ENCODE measurements at regions of chr1 and their contacts with region 1.

Region 1: GRCh38 chr1:91725989-91726721 is 159.8 kb downstream of the TGFBR3 start:
- DNase-seq: peak; percentile 97
- ATAC-seq: peak; percentile 96
- H3K4me3 ChIP-seq: no peak overlapping the region
- H3K27ac ChIP-seq: peak overlapping the region; percentile 94
- H3K4me1 ChIP-seq: peaks cover 10% of the 10 kb centered on the region
- H3K27me3 ChIP-seq: no peaks in the 10 kb centered on the region
- CTCF ChIP-seq: no peak
- POLR2A ChIP-seq: no peak
- RAD21 ChIP-seq: peak; percentile 14; the same call in 1 of the 2 replicates

Region 2: GRCh38 chr1:91440845-91441244 is 285.3 kb before region 1 on chr1:
- CTCF ChIA-PET with region 1: no interaction called
- POLR2A ChIA-PET with region 1: no interaction called
- dilution Hi-C with region 1: no loop called
- in situ Hi-C with region 1: no loop called
- intact Hi-C with region 1: no loop called
- DNase-seq: no peak
- ATAC-seq: no peak
- H3K4me3 ChIP-seq: no peak overlapping the region
- H3K27ac ChIP-seq: no peak overlapping the region
- H3K4me1 ChIP-seq: no peaks in the 10 kb centered on the region
- H3K27me3 ChIP-seq: no peaks in the 10 kb centered on the region
- CTCF ChIP-seq: no peak; the same call in 1 of the 2 replicates
- POLR2A ChIP-seq: no peak
- RAD21 ChIP-seq: no peak

Region 3: GRCh38 chr1:91537281-91537986 is 188.7 kb before region 1 on chr1:
- CTCF ChIA-PET with region 1: no interaction called
- POLR2A ChIA-PET with region 1: no interaction called
- dilution Hi-C with region 1: no loop called
- in situ Hi-C with region 1: no loop called
- intact Hi-C with region 1: loop called (anchors 5 kb)
- DNase-seq: peak; percentile 91
- ATAC-seq: peak; percentile 97
- H3K4me3 ChIP-seq: no peak overlapping the region
- H3K27ac ChIP-seq: no peak overlapping the region
- H3K4me1 ChIP-seq: peaks cover 7% of the 10 kb centered on the region
- H3K27me3 ChIP-seq: peaks cover 45% of the 10 kb centered on the region
- CTCF ChIP-seq: no peak
- POLR2A ChIP-seq: no peak
- RAD21 ChIP-seq: 0 out of 2 replicates have a peak, but pooled peaks have one; percentile 3

Region 4: GRCh38 chr1:91622616-91623015 is 103.5 kb before region 1 on chr1:
- CTCF ChIA-PET with region 1: no interaction called
- POLR2A ChIA-PET with region 1: no interaction called
- dilution Hi-C with region 1: no loop called
- in situ Hi-C with region 1: no loop called
- intact Hi-C with region 1: no loop called
- DNase-seq: no peak
- ATAC-seq: no peak
- H3K4me3 ChIP-seq: no peak overlapping the region
- H3K27ac ChIP-seq: no peak overlapping the region
- H3K4me1 ChIP-seq: no peaks in the 10 kb centered on the region
- H3K27me3 ChIP-seq: peaks cover 5% of the 10 kb centered on the region; the same call in 1 of the 2 replicates
- CTCF ChIP-seq: no peak
- POLR2A ChIP-seq: no peak
- RAD21 ChIP-seq: no peak

Measured in IMR-90 (cell line).